ENCODE measurements at regions of chr9 and their contacts with region 1.

Region 1: DNA sequence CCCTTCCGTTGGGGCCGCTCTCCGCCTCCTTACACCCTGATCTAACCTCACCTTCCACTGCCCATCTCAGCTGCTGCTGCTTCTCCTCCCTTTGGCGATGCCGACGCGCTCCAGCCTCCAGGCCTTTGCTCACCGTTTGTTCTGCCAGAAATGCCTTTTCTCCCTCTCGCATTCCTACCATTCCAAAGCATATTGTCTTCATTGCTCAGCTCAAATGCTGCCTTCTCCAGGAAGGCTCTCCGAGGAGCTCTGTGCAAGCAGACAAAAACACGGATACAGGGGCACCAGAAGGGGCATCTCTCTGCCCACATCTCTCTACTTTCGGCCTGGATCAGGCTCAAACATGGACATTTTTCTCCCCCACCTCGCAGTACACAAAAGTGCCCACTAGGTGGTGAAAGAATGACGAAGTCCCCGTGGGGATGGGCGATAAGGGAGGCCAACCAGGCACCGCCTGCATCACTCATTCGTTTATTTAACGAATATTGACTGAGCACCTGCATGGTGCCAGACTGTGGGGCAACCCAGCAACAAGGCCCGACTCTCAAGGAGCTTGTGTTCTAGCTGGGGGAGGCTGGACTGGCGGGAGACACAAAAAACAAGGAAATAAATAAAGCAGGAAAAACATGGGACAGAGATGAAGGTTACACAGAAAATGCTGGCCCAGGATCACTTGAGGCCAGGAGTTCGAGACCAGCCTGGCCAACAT is 7.3 kb upstream of the GRHPR start:
- DNase-seq: peak; percentile 55
- ATAC-seq: peak; percentile 77
- H3K4me3 Mint-ChIP-seq: peak overlapping the region; percentile 69
- H3K27ac Mint-ChIP-seq: peak overlapping the region; percentile 85
- H3K4me1 Mint-ChIP-seq: peaks cover 63% of the 10 kb centered on the region
- H3K27me3 Mint-ChIP-seq: no peaks in the 10 kb centered on the region
- CTCF ChIP-seq: peak; percentile 64

Region 2: GRCh38 chr9:36632892-36633291 is 782.3 kb before region 1 on chr9:
- CTCF ChIA-PET with region 1: no interaction called
- POLR2A ChIA-PET with region 1: no interaction called
- intact Hi-C with region 1: loop called (anchors 10 kb)
- DNase-seq: no peak
- ATAC-seq: no peak
- H3K4me3 Mint-ChIP-seq: no peak overlapping the region
- H3K27ac Mint-ChIP-seq: no peak overlapping the region
- H3K4me1 Mint-ChIP-seq: no peaks in the 10 kb centered on the region
- H3K27me3 Mint-ChIP-seq: no peaks in the 10 kb centered on the region
- CTCF ChIP-seq: peak; percentile 24

Region 3: GRCh38 chr9:37329576-37329975 is 85.6 kb before region 1 on chr9:
- CTCF ChIA-PET with region 1: interaction called, 13 read pairs
- POLR2A ChIA-PET with region 1: interaction called, 11 read pairs
- intact Hi-C with region 1: no loop called
- DNase-seq: no peak
- ATAC-seq: peak; percentile 47
- H3K4me3 Mint-ChIP-seq: peak overlapping the region; percentile 33
- H3K27ac Mint-ChIP-seq: peak overlapping the region; percentile 83
- H3K4me1 Mint-ChIP-seq: peaks cover 71% of the 10 kb centered on the region
- H3K27me3 Mint-ChIP-seq: no peaks in the 10 kb centered on the region
- CTCF ChIP-seq: no peak

Region 4: GRCh38 chr9:37382161-37382981 is 32.8 kb before region 1 on chr9:
- CTCF ChIA-PET with region 1: interaction called, 103 read pairs
- POLR2A ChIA-PET with region 1: interaction called, 975 read pairs
- intact Hi-C with region 1: no loop called
- DNase-seq: no peak
- ATAC-seq: peak; percentile 23
- H3K4me3 Mint-ChIP-seq: peak overlapping the region; percentile 53
- H3K27ac Mint-ChIP-seq: peak overlapping the region; percentile 97
- H3K4me1 Mint-ChIP-seq: peaks cover 94% of the 10 kb centered on the region
- H3K27me3 Mint-ChIP-seq: no peaks in the 10 kb centered on the region
- CTCF ChIP-seq: no peak

Region 5: DNA sequence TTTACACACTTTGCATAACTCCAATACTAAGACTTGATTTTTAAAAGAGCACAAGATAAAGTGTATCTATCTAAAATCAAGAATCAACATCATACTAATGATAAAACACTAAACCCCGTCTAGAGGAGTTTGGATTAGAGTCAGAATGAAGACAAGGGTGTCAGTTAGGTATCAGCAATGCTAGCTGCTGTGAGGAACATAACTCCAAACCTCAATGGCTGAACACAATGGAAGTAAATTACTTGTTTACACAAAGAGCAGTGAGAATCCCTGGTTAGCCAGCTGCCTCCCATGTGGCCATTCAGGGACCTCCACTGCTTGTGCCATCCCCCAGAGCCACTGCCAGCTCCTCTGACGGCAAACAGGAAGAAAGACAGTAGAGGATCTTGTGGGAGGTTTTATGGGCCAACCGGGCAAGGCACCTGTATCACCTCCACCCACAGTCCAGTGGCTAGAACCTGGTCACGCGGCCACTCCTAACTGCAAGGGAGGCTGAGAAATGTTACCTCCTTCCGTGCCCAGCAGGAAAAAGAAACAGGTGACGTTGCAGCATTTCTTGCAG is 16.6 kb before region 1 on chr9:
- CTCF ChIA-PET with region 1: interaction called, 10 read pairs
- POLR2A ChIA-PET with region 1: interaction called, 677 read pairs
- intact Hi-C with region 1: no loop called
- DNase-seq: no peak
- ATAC-seq: no peak
- H3K4me3 Mint-ChIP-seq: peak overlapping the region; percentile 66
- H3K27ac Mint-ChIP-seq: peak overlapping the region; percentile 92
- H3K4me1 Mint-ChIP-seq: peaks cover 73% of the 10 kb centered on the region
- H3K27me3 Mint-ChIP-seq: no peaks in the 10 kb centered on the region
- CTCF ChIP-seq: no peak

Region 6: DNA sequence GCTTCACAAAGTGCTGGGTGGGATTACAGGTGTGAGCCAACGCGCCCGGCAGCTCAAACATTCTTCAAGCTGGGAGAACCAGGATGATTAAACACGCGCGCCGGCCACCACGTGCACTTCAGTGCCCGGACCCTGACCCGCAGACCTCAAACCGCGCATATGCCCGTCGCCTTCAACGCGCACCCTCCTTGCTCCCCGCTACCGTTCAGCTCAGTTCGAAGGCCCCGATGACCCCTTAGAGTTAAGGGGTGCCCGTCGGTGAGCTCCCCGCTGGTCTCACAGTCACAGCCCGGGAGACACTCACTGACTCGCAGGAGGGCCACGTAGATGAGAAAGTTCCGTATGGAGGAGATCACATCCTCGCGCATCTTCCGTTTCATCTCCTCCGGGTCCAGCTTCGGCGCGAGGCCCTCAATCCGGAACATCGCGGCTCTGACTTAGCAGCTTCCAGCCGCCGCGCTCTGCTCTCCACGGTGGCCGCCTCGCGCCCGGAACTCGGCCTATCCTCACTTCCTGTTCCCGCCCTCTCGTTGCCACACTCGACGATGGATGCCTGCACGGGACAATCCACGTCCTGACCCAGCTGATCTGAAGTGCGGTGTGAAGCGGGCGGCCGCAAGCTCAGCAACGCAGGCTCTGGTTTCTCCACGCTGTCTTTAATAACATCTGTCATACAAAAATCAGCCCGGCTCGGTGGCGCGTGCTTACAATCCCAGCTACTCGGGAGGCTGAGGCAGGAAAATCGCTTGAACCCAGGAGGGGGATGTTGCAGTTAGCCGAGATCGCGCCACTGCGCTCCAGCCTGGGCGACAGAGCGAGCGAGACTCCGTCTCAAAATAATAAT is 177.2 kb after region 1 on chr9 and contains the start of gene TOMM5:
- CTCF ChIA-PET with region 1: no interaction called
- POLR2A ChIA-PET with region 1: interaction called, 6 read pairs
- intact Hi-C with region 1: loop called (anchors 1 kb)
- DNase-seq: peak; percentile 82
- ATAC-seq: peak; percentile 94
- H3K4me3 Mint-ChIP-seq: peak within 1 kb of the TSS; percentile 99
- H3K27ac Mint-ChIP-seq: peak within 1 kb of the TSS; percentile 96
- H3K4me1 Mint-ChIP-seq: peaks cover 47% of the 10 kb centered on the region
- H3K27me3 Mint-ChIP-seq: peaks cover 5% of the 10 kb centered on the region
- CTCF ChIP-seq: no peak
- total RNA-seq, gene TOMM5: 77.8 and 80.3 TPM in 2 replicates